Lower leg skin (tissue), 4 donors: ENCODE measurements at regions of chr3 and their contacts with region 1.

Region 1: GRCh38 chr3:13895155-13896105 is 15.6 kb upstream of the WNT7A start:
- DNase-seq: peak; percentile 94 to 99
- H3K4me3 ChIP-seq: peak overlapping the region; percentile 51
- CTCF ChIP-seq: no peak
- POLR2A ChIP-seq: no peak

Region 2: GRCh38 chr3:14118400-14119381 is 223.3 kb after region 1 on chr3:
- intact Hi-C with region 1: loop called (anchors 5 kb)
- DNase-seq: peak in 1 of 2 donors; percentile 60
- H3K4me3 ChIP-seq: no peak overlapping the region
- CTCF ChIP-seq: no peak
- POLR2A ChIP-seq: no peak